ENCODE measurements at regions of chr6 and their contacts with region 1.

Region 1: DNA sequence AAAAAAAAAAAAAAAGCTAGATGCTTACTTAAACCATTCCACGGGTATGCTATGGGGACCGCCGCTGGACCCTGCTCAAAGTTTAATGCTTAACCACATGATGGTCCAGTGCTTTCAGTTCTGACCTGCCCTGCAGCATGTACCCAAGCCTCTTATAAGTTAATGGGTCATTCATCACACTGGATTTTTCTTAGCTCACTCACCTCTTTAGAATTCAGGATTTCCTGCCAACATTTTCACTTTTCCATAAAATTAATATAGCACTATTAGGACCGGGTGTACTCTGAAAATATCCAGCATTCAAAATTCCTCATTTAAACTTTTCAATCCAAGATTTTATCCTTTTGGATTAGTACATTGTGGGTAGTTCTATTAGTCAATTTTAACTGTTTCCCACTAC is 140.8 kb downstream of the ALDH8A1 start:
- DNase-seq: no peak
- H3K4me3 ChIP-seq: no peak overlapping the region
- H3K27me3 ChIP-seq: no peaks in the 10 kb centered on the region
- CTCF ChIP-seq: no peak

Region 2: GRCh38 chr6:134888316-134888715 is 79.2 kb after region 1 on chr6:
- CTCF ChIA-PET with region 1: no interaction called
- POLR2A ChIA-PET with region 1: interaction called, 13 read pairs
- DNase-seq: peak; percentile 20
- H3K4me3 ChIP-seq: no peak overlapping the region
- H3K27me3 ChIP-seq: no peaks in the 10 kb centered on the region
- CTCF ChIP-seq: no peak

Region 3: DNA sequence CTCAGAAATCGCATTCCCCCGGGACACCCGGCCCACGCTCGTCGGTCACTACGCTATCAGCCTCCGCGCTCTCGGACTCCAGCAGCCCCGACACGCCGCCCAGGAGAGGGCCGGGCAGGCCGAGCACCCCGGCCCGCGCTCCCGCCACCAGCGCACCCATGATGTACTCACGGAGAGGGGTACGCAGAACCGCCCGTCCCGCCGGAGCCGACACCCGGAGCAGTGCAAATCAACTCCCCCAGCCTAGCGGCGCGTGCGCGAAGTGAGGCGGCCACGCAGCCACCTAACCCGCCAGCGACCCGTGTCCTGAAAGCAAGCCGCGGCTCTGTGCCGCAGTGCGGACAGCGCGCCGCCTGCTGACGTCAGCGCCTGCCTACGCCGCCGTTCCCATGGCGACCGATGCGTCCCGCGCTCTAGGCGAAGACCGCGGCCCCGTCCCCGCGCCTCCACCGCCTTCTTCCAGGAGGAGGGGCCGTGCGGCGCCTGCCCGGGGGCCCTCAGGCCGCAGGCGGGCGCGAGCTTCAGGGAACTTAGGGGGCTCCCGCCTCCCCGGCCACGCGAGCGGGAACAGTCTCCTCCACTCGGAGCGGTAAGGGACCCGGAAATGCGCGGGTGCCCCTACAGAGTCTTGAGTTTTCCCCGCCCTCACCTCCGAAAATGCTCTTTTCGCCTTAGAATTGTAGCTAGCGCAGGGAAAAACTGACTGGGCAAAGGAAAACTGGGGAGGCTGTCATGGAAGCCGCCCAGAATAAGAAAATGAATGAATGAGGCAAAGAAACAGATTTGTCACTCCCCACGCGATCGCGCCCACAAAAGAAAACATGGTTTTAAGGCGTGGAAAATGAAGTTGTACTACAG is 688.5 kb after region 1 on chr6 and contains the start of gene AHI1:
- CTCF ChIA-PET with region 1: no interaction called
- POLR2A ChIA-PET with region 1: no interaction called
- DNase-seq: peak; percentile 56
- H3K4me3 ChIP-seq: peak within 1 kb of the TSS; percentile 72
- H3K27me3 ChIP-seq: no peaks in the 10 kb centered on the region
- CTCF ChIP-seq: no peak
- polyA plus RNA-seq, gene AHI1: 7.9 and 15.8 TPM in 2 replicates